ENCODE measurements at regions of chr6 and their contacts with region 1.

Region 1: DNA sequence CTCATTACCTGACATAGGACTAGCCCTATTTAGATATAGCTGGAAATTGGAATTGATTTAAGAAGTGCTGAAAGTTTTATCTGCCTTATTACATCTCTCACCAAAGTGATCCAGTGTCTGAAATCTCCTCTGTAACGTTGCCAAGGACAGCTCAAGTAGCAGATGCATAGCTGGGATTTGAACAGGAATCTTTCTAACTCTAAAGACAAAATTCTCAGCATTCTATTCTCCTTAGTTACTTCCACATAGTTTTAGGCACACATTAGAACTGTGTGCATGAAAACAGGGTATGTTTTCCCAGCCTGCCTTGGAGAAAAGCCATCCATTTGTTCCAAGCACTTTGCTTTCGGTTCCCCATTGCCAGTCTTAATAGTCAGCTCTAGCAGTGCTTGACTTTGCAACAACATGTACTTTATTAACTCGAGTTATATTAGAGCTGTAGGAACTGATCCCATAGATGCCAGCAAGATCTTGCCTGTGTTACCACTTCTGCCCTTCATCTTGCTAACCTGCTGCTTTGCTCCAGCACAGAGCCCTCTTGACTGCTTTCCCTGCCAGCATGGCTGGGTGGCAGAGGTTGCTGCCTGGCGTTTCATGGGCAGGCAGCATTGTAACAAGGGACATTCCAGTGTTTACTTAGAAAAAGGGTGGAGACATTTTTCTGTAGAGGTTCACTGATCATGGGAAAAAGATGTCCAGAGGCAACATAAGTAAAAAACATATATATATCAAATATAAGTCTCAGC is 56.1 kb upstream of the STMND1 start:
- DNase-seq: peak; percentile 6
- H3K4me3 ChIP-seq: no peak overlapping the region
- H3K27ac ChIP-seq: no peak overlapping the region
- H3K4me1 ChIP-seq: peaks cover 7% of the 10 kb centered on the region
- H3K27me3 ChIP-seq: peaks cover 0 to 3% of the 10 kb centered on the region in 2 experiments
- CTCF ChIP-seq: no peak
- POLR2A ChIP-seq: no peak

Region 2: DNA sequence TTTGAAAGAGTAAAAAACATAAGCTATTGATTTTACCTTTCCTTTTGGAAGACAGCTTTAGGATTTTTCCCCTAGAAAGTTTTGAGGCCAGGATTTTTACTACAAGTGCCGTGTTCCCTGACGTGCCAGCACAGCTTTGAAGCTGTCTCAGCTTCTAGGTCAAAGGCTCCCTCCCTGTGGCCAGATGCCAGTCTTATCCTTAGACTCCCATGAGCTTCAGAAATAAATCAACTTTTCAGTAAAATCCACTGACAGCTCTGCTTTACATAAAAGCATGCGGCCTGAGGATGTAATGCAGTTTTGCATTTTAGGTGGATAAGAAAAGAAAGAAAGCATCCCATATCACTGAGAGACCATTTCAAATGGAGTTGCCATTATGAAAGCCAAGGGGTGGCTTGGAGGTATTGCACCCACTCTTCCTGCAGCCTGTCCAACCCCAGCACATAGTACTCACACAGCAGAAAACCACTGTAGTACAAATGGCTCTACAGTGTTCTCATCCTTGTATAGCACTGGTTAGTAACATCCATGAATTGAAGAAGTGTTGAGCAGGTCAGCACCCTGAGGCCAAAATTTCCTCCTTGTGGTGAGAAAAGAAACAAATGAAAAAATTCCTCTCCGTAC is 269.2 kb before region 1 on chr6:
- CTCF ChIA-PET with region 1: no interaction called
- POLR2A ChIA-PET with region 1: no interaction called
- dilution Hi-C with region 1: no loop called
- intact Hi-C with region 1: no loop called
- DNase-seq: no peak
- H3K4me3 ChIP-seq: no peak overlapping the region
- H3K27ac ChIP-seq: no peak overlapping the region
- H3K4me1 ChIP-seq: no peaks in the 10 kb centered on the region
- H3K27me3 ChIP-seq: peaks cover 0 to 1% of the 10 kb centered on the region in 2 experiments
- CTCF ChIP-seq: no peak
- POLR2A ChIP-seq: no peak

Region 3: GRCh38 chr6:17200395-17200794 is 154.6 kb after region 1 on chr6:
- CTCF ChIA-PET with region 1: no interaction called
- POLR2A ChIA-PET with region 1: no interaction called
- dilution Hi-C with region 1: no loop called
- intact Hi-C with region 1: no loop called
- DNase-seq: no peak
- H3K4me3 ChIP-seq: no peak overlapping the region
- H3K27ac ChIP-seq: no peak overlapping the region
- H3K4me1 ChIP-seq: no peaks in the 10 kb centered on the region
- H3K27me3 ChIP-seq: no peaks in the 10 kb centered on the region
- CTCF ChIP-seq: peak; percentile 9 to 35
- POLR2A ChIP-seq: no peak

Region 4: GRCh38 chr6:17962436-17963031 is 916.8 kb after region 1 on chr6:
- CTCF ChIA-PET with region 1: no interaction called
- POLR2A ChIA-PET with region 1: no interaction called
- dilution Hi-C with region 1: no loop called
- intact Hi-C with region 1: no loop called
- DNase-seq: no peak
- H3K4me3 ChIP-seq: no peak overlapping the region
- H3K27ac ChIP-seq: no peak overlapping the region
- H3K4me1 ChIP-seq: peaks cover 12% of the 10 kb centered on the region
- H3K27me3 ChIP-seq: no peaks in the 10 kb centered on the region
- CTCF ChIP-seq: no peak
- POLR2A ChIP-seq: no peak

Region 5: GRCh38 chr6:18545726-18546125 is 1500.0 kb after region 1 on chr6:
- CTCF ChIA-PET with region 1: no interaction called
- POLR2A ChIA-PET with region 1: interaction called, 14 read pairs
- dilution Hi-C with region 1: no loop called
- intact Hi-C with region 1: no loop called
- DNase-seq: peak; percentile 48
- H3K4me3 ChIP-seq: no peak overlapping the region
- H3K27ac ChIP-seq: no peak overlapping the region
- H3K4me1 ChIP-seq: peaks cover 6% of the 10 kb centered on the region
- H3K27me3 ChIP-seq: no peaks in the 10 kb centered on the region
- CTCF ChIP-seq: no peak
- POLR2A ChIP-seq: no peak